ENCODE measurements at regions of chr3 and their contacts with region 1.

Region 1: DNA sequence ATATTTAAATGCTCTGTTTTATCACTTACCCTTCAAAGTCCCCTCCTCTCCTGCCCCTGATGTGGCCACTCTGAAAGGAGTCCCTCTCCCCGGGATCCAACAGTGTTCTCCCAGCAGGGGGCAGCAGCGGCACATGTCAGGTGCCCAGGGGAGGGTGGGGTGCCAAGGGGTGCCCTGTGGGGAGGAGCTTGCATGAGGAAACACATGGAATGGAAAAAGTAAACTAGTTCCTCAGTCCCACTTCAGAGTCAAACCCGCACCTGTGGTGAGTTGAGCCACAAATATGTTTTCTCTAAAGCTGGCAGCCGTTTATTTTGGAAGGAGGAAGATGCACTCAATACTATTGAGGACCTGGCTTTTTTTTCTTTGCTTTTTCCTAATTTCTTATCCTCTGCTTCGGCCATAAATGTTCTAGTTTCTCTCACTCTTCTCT is 30.1 kb upstream of the NRROS start:
- DNase-seq: peak; percentile 85
- H3K4me3 Mint-ChIP-seq: peak overlapping the region; percentile 20
- H3K27ac Mint-ChIP-seq: peak overlapping the region; percentile 56
- H3K4me1 Mint-ChIP-seq: peaks cover 43% of the 10 kb centered on the region
- H3K27me3 Mint-ChIP-seq: peaks cover 2% of the 10 kb centered on the region

Region 2: DNA sequence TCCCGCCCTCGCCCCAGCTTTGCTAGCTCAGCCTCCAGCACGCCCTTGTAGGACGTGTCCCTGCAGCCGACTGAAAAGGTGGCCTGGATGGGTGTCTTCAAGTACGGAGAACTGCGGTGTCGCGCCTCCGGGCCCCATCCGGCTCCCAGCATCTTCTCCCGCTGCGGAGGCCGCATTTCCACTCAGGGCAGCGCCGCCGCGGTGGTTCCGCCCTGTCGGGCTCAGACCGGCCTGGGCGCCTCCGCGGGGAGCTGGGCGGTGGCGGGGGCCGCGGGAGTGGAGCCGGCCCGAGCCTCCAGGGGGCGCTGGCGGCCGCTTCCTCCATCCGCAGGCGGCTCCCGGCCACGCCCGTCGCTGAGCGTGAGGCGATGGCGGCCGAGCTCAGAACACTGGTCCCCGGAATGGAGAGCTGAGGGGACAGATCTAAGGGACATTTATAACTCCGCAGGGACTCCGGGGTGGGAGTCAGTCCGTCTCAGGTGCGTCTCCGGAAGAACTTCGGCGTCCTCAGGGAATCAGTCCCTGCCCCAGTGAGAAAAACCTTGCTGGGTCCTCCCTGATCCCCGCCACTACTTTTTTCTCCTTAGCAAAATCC is 80.6 kb before region 1 on chr3:
- intact Hi-C with region 1: loop called (anchors 2 kb)
- DNase-seq: peak; percentile 76
- H3K4me3 Mint-ChIP-seq: peak overlapping the region; percentile 76
- H3K27ac Mint-ChIP-seq: peak overlapping the region; percentile 75
- H3K4me1 Mint-ChIP-seq: peaks cover 8% of the 10 kb centered on the region
- H3K27me3 Mint-ChIP-seq: peaks cover 6% of the 10 kb centered on the region

Region 3: GRCh38 chr3:196624067-196624790 is 14.9 kb after region 1 on chr3:
- intact Hi-C with region 1: loop called (anchors 1 kb)
- DNase-seq: no peak
- H3K4me3 Mint-ChIP-seq: peak overlapping the region; percentile 47
- H3K27ac Mint-ChIP-seq: peak overlapping the region; percentile 63
- H3K4me1 Mint-ChIP-seq: peaks cover 27% of the 10 kb centered on the region
- H3K27me3 Mint-ChIP-seq: no peaks in the 10 kb centered on the region

Region 4: DNA sequence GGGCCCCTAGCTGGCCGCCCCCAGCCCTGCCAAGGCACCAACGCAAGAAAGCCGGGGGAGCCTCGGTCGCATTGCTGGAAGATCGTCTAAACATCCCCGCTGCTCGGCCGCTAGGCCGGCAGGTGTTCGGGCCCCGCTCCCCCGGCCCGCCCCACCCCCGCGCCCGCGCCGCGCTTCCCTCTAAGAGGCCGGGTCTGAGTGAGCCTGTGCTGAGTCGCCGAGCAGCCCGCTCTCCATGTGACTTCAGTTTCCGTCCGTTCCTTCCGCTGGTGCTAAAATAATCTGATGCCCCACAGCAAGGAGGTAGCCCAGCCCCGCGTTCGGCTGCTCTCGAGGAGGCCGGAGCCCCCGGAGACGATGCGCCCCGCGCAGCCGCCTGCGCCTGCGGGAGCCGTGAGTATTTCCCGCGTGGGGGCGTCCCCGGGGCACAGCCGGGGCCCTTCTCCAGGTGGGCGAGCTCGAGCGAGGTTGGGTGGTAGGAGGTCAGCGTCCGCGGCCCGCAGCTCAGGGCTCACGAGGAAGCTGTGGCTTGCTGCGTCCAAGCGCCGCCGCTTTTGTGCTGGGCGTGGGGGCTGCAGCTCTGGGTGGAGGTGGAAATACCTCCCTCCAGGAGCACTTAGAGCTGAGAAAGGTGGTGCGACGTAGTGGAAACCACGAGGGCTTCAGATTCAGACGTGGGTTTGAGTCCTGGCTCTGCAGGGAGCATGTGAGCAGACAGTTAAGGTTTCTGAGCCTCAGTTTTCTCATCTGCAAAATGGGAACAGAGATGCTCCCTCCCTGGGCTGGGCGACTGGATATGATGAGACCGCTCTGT is 30.3 kb after region 1 on chr3 and contains the start of gene NRROS:
- intact Hi-C with region 1: loop called (anchors 1 kb)
- DNase-seq: peak; percentile 61
- H3K4me3 Mint-ChIP-seq: peak within 1 kb of the TSS; percentile 94
- H3K27ac Mint-ChIP-seq: peak within 1 kb of the TSS; percentile 94
- H3K4me1 Mint-ChIP-seq: peaks cover 75% of the 10 kb centered on the region
- H3K27me3 Mint-ChIP-seq: no peaks in the 10 kb centered on the region
- total RNA-seq, gene NRROS: 37.8 and 38.8 TPM in 2 replicates

Region 5: GRCh38 chr3:196694202-196694638 is 84.9 kb after region 1 on chr3:
- intact Hi-C with region 1: loop called (anchors 1 kb)
- DNase-seq: no peak
- H3K4me3 Mint-ChIP-seq: peak overlapping the region; percentile 19
- H3K27ac Mint-ChIP-seq: peak overlapping the region; percentile 88
- H3K4me1 Mint-ChIP-seq: no peaks in the 10 kb centered on the region
- H3K27me3 Mint-ChIP-seq: peaks cover 3% of the 10 kb centered on the region

Region 6: GRCh38 chr3:196789759-196790419 is 180.5 kb after region 1 on chr3:
- intact Hi-C with region 1: no loop called
- DNase-seq: no peak
- H3K4me3 Mint-ChIP-seq: no peak overlapping the region
- H3K27ac Mint-ChIP-seq: no peak overlapping the region
- H3K4me1 Mint-ChIP-seq: peaks cover 11% of the 10 kb centered on the region
- H3K27me3 Mint-ChIP-seq: no peaks in the 10 kb centered on the region

Region 7: GRCh38 chr3:196803891-196804468 is 194.6 kb after region 1 on chr3:
- intact Hi-C with region 1: loop called (anchors 2 kb)
- DNase-seq: no peak
- H3K4me3 Mint-ChIP-seq: no peak overlapping the region
- H3K27ac Mint-ChIP-seq: peak overlapping the region; percentile 62
- H3K4me1 Mint-ChIP-seq: peaks cover 15% of the 10 kb centered on the region
- H3K27me3 Mint-ChIP-seq: no peaks in the 10 kb centered on the region

Region 8: GRCh38 chr3:196969660-196970546 is 360.5 kb after region 1 on chr3:
- intact Hi-C with region 1: loop called (anchors 1 kb)
- DNase-seq: peak; percentile 67
- H3K4me3 Mint-ChIP-seq: peak overlapping the region; percentile 86
- H3K27ac Mint-ChIP-seq: peak overlapping the region; percentile 86
- H3K4me1 Mint-ChIP-seq: peaks cover 17% of the 10 kb centered on the region
- H3K27me3 Mint-ChIP-seq: peaks cover 11% of the 10 kb centered on the region